PC-9 (cell line): ENCODE measurements at regions of chr2 and their contacts with region 1.

Region 1: DNA sequence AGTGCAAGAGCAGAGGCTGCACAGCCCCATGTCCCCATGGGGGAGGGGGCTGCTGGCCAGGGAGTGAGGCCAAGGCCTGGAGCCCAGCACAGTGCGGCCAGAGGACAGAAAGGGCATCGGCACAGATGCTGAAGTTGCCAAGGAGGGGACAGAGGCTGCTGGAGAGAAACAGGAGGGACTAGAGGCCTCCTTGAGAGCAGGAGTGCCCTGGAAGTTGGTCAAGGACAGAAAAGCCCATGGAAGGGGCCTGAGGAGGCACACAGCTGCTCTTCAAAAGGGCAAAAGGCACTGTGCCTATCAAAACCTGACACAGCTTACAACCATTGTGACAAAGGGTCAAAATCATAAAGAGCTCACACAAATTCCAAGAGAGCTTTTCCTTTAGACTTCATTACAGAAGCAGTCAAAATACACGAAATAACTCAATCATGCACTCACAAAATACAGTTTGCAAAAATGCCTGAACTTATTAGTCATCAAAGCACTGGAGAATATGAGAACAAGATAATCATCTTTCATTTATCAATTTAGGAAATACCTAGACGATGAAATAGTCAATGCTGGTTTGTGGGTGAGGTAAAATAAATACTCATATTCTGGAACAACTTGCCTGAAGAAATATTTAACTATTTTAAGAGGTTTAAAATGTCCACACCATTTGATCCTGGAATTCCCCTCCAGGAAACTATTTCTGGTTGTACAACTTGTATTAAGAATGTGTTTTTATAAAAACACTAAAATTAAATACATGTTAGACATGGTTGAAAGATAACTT is 79.6 kb downstream of the USP40 start:
- DNase-seq: peak; percentile 63 to 100
- H3K4me3 ChIP-seq: 0 out of 2 replicates have a peak overlapping the region, but pooled peaks have one; percentile 1
- H3K27ac ChIP-seq: peak overlapping the region; percentile 93
- H3K4me1 ChIP-seq: peaks cover 61% of the 10 kb centered on the region
- H3K27me3 ChIP-seq: no peaks in the 10 kb centered on the region
- CTCF ChIP-seq: no peak

Region 2: GRCh38 chr2:233375490-233376314 is 111.3 kb before region 1 on chr2:
- CTCF ChIA-PET with region 1: no interaction called
- POLR2A ChIA-PET with region 1: no interaction called
- intact Hi-C with region 1: no loop called
- DNase-seq: no peak
- H3K4me3 ChIP-seq: no peak overlapping the region
- H3K27ac ChIP-seq: no peak overlapping the region
- H3K4me1 ChIP-seq: peaks cover 7% of the 10 kb centered on the region
- H3K27me3 ChIP-seq: no peaks in the 10 kb centered on the region
- CTCF ChIP-seq: no peak

Region 3: GRCh38 chr2:233413559-233414272 is 73.2 kb before region 1 on chr2:
- CTCF ChIA-PET with region 1: no interaction called
- POLR2A ChIA-PET with region 1: interaction called, 21 read pairs
- intact Hi-C with region 1: loop called (anchors 2 kb)
- DNase-seq: peak; percentile 93
- H3K4me3 ChIP-seq: peak overlapping the region; percentile 18; the same call in 1 of the 2 replicates
- H3K27ac ChIP-seq: peak overlapping the region; percentile 88
- H3K4me1 ChIP-seq: peaks cover 38% of the 10 kb centered on the region
- H3K27me3 ChIP-seq: no peaks in the 10 kb centered on the region
- CTCF ChIP-seq: no peak

Region 4: GRCh38 chr2:233460726-233461441 is 26.1 kb before region 1 on chr2:
- CTCF ChIA-PET with region 1: no interaction called
- POLR2A ChIA-PET with region 1: no interaction called
- intact Hi-C with region 1: no loop called
- DNase-seq: peak; percentile 62 to 63
- H3K4me3 ChIP-seq: no peak overlapping the region
- H3K27ac ChIP-seq: no peak overlapping the region
- H3K4me1 ChIP-seq: no peaks in the 10 kb centered on the region
- H3K27me3 ChIP-seq: no peaks in the 10 kb centered on the region
- CTCF ChIP-seq: no peak

Region 5: DNA sequence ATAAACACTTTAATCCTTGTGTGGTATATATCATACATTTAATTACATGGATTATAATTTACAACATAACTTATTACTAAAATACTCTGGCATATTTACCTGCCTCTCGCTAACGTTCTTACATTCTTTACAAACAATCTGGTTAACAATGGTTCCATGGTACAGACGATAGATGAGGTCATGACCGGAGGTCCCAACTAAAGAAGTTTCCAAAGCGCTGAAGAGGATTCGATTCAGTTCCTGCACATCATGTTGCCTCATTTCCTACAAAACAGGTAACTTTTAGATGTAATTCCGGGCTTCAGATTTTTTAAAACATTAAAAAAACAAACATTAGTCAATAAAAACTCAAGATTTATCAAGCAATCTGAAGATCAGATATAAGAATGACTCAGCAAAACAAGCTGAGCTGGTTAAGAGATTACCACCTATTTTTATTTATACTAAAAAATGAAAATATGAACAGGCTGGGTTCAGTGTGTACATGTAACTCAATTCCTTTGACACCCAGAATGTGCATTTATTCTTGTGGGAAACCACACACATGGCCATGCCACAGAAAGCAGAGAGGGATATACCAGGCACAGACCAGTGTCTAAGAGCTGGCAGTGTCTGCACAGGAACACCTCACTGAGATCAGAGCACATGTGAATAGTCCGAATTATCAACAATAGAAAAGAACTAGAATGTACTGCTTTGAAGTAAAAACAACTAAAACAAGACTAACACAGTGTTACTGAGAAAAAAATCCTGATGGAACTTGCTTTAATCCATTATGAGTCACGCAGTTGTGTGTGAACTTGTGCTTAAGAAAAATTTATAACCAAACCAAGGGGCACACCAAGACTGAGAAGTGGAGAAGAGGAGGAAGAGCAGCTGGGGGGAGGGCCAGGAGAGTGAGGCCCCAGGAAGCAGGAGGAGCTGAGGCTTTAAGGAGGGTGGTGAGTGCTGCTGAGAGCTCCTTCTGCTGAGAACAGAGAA is 70.1 kb after region 1 on chr2:
- CTCF ChIA-PET with region 1: no interaction called
- POLR2A ChIA-PET with region 1: interaction called, 8 read pairs
- intact Hi-C with region 1: loop called (anchors 1 kb)
- DNase-seq: peak; percentile 55 to 89
- H3K4me3 ChIP-seq: peak overlapping the region; percentile 25; the same call in 1 of the 2 replicates
- H3K27ac ChIP-seq: peak overlapping the region; percentile 98
- H3K4me1 ChIP-seq: peaks cover 41% of the 10 kb centered on the region
- H3K27me3 ChIP-seq: no peaks in the 10 kb centered on the region
- CTCF ChIP-seq: no peak

Region 6: GRCh38 chr2:233700028-233700635 is 213.2 kb after region 1 on chr2:
- CTCF ChIA-PET with region 1: interaction called, 4 read pairs
- POLR2A ChIA-PET with region 1: interaction called, 20 read pairs
- intact Hi-C with region 1: no loop called
- DNase-seq: peak; percentile 67 to 98
- H3K4me3 ChIP-seq: peak overlapping the region; percentile 69; the same call in 1 of the 2 replicates
- H3K27ac ChIP-seq: peak overlapping the region; percentile 97
- H3K4me1 ChIP-seq: peaks cover 92% of the 10 kb centered on the region
- H3K27me3 ChIP-seq: no peaks in the 10 kb centered on the region
- CTCF ChIP-seq: no peak

Region 7: GRCh38 chr2:233832869-233833311 is 345.9 kb after region 1 on chr2:
- CTCF ChIA-PET with region 1: interaction called, 11 read pairs
- POLR2A ChIA-PET with region 1: no interaction called
- intact Hi-C with region 1: no loop called
- DNase-seq: peak; percentile 77 to 83
- H3K4me3 ChIP-seq: no peak overlapping the region
- H3K27ac ChIP-seq: no peak overlapping the region
- H3K4me1 ChIP-seq: no peaks in the 10 kb centered on the region
- H3K27me3 ChIP-seq: no peaks in the 10 kb centered on the region
- CTCF ChIP-seq: peak; percentile 74

Region 8: DNA sequence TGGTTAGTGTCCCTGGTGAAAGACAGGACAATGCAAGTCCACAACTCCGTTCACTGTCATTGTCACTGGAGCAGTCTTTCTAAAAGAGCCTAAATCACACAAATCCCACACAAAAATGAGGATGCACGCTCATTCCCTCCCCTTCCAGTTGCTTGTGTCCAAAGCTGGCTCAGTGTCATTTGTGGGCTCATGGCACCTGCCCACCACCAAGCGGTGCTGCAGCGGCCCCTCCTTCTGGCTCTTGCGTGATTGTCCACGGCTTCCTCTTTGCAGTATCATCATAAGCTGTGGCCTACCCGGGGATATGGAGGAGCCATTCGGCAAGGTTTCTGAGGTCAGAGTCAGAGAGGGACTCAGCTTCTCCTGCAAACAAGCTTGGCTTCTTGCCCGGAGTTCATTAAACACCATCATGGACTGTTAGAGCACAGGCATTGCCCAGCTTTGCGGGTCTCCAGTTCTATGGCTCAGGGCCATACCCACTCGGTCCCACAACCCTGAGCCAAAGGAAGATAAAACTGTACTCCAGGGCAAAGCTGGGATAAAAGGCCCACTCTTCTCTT is 1827.5 kb after region 1 on chr2:
- CTCF ChIA-PET with region 1: no interaction called
- POLR2A ChIA-PET with region 1: no interaction called
- intact Hi-C with region 1: no loop called
- DNase-seq: no peak
- H3K4me3 ChIP-seq: no peak overlapping the region
- H3K27ac ChIP-seq: no peak overlapping the region
- H3K4me1 ChIP-seq: peaks cover 12% of the 10 kb centered on the region
- H3K27me3 ChIP-seq: no peaks in the 10 kb centered on the region
- CTCF ChIP-seq: no peak